Mammary epithelial cell (primary cell): ENCODE measurements at regions of chr9 and their contacts with region 1.

Region 1: GRCh38 chr9:124551472-124552272 is 44.5 kb upstream of the NR5A1 start:
- DNase-seq: peak; percentile 76
- H3K4me3 ChIP-seq: no peak overlapping the region
- H3K27ac ChIP-seq: no peak overlapping the region
- H3K4me1 ChIP-seq: peaks cover 11% of the 10 kb centered on the region
- H3K27me3 ChIP-seq: no peaks in the 10 kb centered on the region
- CTCF ChIP-seq: peak; percentile 76 to 85

Region 2: DNA sequence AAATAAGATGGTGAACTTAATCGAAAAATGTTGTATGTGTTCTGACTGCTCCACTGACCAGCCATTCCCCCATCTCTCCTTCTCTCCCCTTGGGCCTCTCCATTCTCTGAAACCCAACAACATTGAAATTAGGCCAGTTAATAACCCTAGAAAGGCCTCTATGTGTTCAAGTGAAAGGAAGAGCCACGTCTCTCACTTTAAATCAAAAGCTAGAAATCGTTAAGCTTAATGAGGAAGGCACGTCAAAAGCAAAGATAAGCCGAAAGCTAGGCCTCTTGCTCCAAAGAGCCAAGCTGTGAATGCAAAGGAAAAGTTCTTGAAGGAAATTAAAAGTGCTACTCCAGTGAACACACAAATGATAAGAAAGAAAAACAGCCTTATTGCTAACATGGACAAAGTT is 33.0 kb after region 1 on chr9:
- CTCF ChIA-PET with region 1: no interaction called
- dilution Hi-C with region 1: loop called (anchors 5 kb)
- in situ Hi-C with region 1: no loop called
- intact Hi-C with region 1: no loop called
- DNase-seq: no peak
- H3K4me3 ChIP-seq: no peak overlapping the region
- H3K27ac ChIP-seq: no peak overlapping the region
- H3K4me1 ChIP-seq: no peaks in the 10 kb centered on the region
- H3K27me3 ChIP-seq: no peaks in the 10 kb centered on the region
- CTCF ChIP-seq: no peak

Region 3: GRCh38 chr9:124629600-124629999 is 77.9 kb after region 1 on chr9:
- CTCF ChIA-PET with region 1: no interaction called
- dilution Hi-C with region 1: no loop called
- in situ Hi-C with region 1: no loop called
- intact Hi-C with region 1: no loop called
- DNase-seq: peak; percentile 47
- H3K4me3 ChIP-seq: no peak overlapping the region
- H3K27ac ChIP-seq: no peak overlapping the region
- H3K4me1 ChIP-seq: peaks cover 3% of the 10 kb centered on the region
- H3K27me3 ChIP-seq: no peaks in the 10 kb centered on the region
- CTCF ChIP-seq: no peak